Activated B cell treated with CpG ODN at 0.5 μM for 24 hours (primary cell): ENCODE measurements at regions of chr17 and their contacts with region 1.

Region 1: DNA sequence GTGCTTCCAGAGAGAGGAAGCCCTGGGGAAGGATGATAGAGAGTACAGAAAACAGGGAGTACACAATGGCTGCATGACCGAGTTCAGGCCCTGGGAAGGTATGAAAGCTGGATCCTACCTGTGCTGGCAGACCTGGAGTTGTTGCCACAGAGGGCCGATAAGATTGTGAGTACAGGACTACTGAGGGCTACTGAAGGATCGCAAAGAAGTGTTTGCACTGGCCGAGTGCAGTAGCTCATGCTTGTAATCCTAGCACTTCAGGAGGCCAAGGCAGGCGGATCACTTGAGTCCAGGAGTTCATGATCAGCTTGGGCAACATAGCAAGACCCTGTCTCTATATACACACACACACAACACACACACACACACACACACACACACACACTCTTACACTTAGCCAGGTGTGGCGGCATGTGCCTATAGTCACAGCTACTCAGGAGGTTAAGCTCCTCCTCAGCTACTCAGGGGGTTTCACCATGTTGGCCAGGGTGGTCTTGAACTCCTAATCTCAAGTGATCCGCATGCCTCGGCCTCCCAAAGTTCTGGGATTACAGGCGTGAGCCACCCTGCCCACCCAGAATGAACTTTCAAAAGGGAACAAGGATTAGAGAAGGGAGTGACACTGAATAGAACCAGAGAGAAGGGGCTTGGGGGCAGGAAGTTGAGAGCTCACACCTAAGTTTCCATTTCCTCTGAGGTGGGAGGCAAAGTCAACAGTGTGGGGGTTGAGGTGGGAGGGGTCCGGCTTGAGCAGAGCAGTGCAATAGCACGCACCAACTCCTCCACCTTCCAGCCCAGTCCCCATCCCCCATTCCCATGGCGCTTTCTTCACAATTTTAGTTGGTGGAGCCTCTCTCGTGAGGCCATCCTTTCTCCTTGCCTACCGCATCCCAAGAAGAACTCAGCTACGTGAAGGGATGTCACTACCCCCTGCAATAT is 7.5 kb downstream of the SCIMP start:
- DNase-seq: no peak
- ATAC-seq: peak; percentile 56
- H3K4me3 Mint-ChIP-seq: peak overlapping the region; percentile 75
- H3K27ac Mint-ChIP-seq: peak overlapping the region; percentile 98
- H3K4me1 Mint-ChIP-seq: peaks cover 100% of the 10 kb centered on the region
- H3K27me3 Mint-ChIP-seq: no peaks in the 10 kb centered on the region
- CTCF ChIP-seq: no peak

Region 2: DNA sequence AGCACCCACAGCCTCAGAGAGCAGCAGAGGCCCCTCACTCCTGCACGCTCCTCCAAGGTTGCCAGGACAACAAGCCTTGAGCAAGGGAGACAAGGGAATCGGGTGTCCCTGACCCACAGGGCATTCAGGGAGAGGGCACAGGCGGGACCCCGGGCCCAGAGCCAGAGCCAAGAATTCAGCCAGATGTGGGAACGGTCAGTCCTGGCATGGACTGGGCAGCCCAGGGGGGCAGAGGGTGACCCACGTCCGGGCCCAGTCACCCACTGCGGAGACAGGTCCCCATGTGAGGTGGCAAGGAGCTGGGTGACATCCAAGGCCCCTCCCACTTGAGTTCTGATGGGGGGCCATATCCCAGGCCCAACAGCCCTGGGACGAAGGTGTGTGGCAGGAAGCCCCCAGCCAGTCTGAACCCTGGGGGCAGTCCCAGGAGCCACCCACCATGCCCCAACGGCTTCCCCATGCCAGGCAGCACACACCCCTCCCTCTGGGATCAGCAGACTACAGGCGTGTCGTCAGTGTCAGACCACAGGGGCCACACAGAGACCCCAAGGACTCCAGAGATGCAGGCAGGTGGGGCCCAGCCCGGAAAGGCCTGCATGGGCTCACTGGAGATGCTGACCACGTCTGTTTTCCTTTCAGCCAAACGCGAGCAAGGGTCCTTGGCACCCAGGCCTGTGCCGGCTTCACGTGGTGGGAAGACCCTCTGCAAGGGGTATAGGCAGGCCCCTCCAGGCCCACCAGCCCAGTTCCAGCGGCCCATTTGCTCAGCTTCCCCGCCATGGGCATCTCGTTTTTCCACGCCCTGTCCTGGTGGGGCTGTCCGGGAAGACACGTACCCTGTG is 88.4 kb before region 1 on chr17:
- CTCF ChIA-PET with region 1: no interaction called
- POLR2A ChIA-PET with region 1: no interaction called
- intact Hi-C with region 1: no loop called
- DNase-seq: no peak
- ATAC-seq: no peak
- H3K4me3 Mint-ChIP-seq: no peak overlapping the region
- H3K27ac Mint-ChIP-seq: no peak overlapping the region
- H3K4me1 Mint-ChIP-seq: no peaks in the 10 kb centered on the region
- H3K27me3 Mint-ChIP-seq: peaks cover 3% of the 10 kb centered on the region
- CTCF ChIP-seq: no peak

Region 3: DNA sequence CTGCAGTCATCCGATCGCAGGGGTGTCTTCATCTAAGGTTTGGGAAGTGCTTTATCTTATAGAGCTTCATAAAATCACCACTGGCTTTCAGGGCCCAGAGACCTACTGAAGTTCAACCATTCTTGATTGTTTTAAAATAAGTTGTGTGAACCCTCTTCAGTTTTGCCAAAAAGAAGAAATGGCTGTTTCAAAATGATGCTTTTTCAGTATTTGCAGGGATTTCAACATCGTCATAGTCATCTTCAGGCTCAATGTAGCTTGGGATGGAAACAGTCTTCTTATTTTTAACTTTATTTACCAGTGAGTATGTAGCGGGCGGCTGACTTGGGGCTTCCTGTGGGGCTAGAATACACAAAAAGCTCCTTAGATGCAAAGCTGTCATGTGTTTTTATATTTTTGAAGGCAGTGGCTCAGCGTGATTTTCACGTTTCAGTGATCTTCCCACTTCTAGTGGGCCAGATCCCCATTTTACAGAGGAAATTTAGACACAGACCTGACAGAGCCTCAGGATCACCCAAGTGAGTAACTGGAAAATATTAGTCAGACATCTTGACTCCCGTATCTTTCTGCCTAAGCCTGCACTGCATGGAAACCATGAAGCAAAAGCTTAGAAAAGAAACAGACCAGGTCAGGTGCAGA is 16.5 kb before region 1 on chr17:
- CTCF ChIA-PET with region 1: interaction called, 3 read pairs
- POLR2A ChIA-PET with region 1: interaction called, 130 read pairs
- intact Hi-C with region 1: loop called (anchors 2 kb)
- DNase-seq: no peak
- ATAC-seq: peak; percentile 74
- H3K4me3 Mint-ChIP-seq: peak overlapping the region; percentile 68
- H3K27ac Mint-ChIP-seq: peak overlapping the region; percentile 96
- H3K4me1 Mint-ChIP-seq: peaks cover 78% of the 10 kb centered on the region
- H3K27me3 Mint-ChIP-seq: no peaks in the 10 kb centered on the region
- CTCF ChIP-seq: no peak

Region 4: GRCh38 chr17:5419356-5419958 is 192.2 kb after region 1 on chr17 and contains the start of gene NUP88:
- CTCF ChIA-PET with region 1: no interaction called
- POLR2A ChIA-PET with region 1: interaction called, 17 read pairs
- intact Hi-C with region 1: no loop called
- DNase-seq: peak; percentile 87
- ATAC-seq: peak; percentile 86
- H3K4me3 Mint-ChIP-seq: peak within 1 kb of the TSS; percentile 100
- H3K27ac Mint-ChIP-seq: peak within 1 kb of the TSS; percentile 100
- H3K4me1 Mint-ChIP-seq: peaks cover 49% of the 10 kb centered on the region
- H3K27me3 Mint-ChIP-seq: no peaks in the 10 kb centered on the region
- CTCF ChIP-seq: no peak
- total RNA-seq, gene NUP88: 158 and 187 TPM in 2 replicates